Activated CD4-positive, alpha-beta memory T cell treated with anti-CD3 and anti-CD28 coated beads, Interleukin-2, amount 10 ng/mL, durations not matched to agents 7 days and 5 days (primary cell): ENCODE measurements at regions of chr9 and their contacts with region 1.

Region 1: DNA sequence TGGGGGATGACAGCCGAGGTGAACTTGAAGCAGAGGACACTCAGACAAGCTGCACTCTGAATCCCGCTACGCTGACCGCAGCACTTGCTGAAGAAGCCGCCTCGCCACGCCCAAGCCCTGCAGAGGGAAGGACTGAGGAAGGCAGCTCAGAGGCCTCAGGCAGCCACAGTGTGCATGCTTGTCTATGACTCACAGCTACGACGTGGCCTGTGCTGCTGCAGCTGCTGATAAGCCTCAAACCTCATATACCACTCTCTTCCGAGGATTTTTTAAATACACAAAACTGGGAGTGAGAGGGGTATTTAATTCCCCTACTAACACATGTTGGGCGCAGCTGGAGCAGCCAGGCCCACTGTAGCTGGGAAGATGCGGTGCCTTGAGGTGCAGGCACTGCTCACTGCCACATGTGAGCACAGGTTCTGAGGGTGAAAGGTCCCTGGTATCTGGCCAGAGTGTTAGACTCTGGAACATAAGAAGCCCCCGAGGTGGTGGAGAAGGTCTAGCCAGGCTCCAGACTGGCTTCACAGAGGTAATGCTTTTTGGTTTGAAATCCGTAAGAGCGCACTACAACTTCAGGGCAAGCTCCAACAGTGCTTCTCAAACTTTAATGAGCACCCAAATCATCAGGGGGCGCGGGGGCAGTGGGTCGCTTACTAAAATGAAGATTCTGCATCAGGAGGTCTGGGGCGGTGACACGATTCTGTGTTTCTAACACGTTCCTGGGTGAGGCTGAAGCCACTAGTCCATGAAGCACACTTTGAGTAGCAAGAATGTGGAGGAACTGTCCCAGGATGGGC is 196.8 kb downstream of the AUH start:
- DNase-seq: peak; percentile 91
- H3K4me3 Mint-ChIP-seq: peak overlapping the region; percentile 88
- H3K27ac Mint-ChIP-seq: peak overlapping the region; percentile 94
- H3K4me1 Mint-ChIP-seq: peaks cover 70% of the 10 kb centered on the region
- H3K27me3 Mint-ChIP-seq: no peaks in the 10 kb centered on the region

Region 2: GRCh38 chr9:91036826-91037510 is 128.0 kb before region 1 on chr9:
- CTCF ChIA-PET with region 1: interaction called, 6 read pairs
- POLR2A ChIA-PET with region 1: interaction called, 13 read pairs
- DNase-seq: peak; percentile 85
- H3K4me3 Mint-ChIP-seq: peak overlapping the region; percentile 31
- H3K27ac Mint-ChIP-seq: peak overlapping the region; percentile 74
- H3K4me1 Mint-ChIP-seq: peaks cover 65% of the 10 kb centered on the region
- H3K27me3 Mint-ChIP-seq: no peaks in the 10 kb centered on the region

Region 3: DNA sequence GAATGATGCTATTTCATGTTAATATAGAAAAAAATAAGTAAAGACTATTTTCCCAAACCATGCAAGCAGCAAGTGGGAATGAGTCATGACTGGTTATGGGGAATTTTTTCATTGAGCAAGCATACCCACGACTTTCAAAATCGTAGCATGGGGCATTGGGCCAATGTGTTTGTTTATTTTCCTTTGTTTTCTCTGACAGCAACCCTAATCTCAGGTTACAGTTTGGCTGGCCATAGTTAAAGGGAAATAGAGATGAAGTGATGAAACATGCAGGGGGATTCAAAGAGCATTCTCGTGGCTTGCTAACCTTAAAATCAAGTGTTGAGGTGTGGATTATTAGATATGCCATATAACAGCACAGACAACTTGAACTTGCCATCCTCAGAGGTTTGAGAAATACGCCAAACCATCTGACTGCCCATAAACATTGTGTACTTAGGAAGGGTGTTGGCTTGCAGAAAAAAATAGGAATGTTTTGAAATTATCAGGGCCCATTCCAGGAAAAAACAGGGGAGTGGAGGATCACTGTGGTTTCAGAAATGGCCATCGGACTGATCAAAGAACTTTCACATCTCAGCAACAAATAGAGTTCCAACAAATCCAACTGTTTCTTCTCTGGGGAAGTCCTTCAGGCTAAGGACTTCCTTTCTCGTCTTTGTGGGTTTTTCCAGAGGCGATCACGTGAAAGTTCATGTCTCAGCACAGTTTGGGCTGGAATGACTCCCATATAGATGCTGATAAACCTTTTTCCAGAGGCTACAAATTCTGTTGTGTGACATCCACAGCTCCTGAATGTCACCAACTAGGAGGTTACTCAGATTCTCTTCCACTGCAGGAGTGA is 104.2 kb before region 1 on chr9:
- CTCF ChIA-PET with region 1: no interaction called
- POLR2A ChIA-PET with region 1: no interaction called
- DNase-seq: no peak
- H3K4me3 Mint-ChIP-seq: no peak overlapping the region
- H3K27ac Mint-ChIP-seq: no peak overlapping the region
- H3K4me1 Mint-ChIP-seq: peaks cover 23% of the 10 kb centered on the region
- H3K27me3 Mint-ChIP-seq: no peaks in the 10 kb centered on the region

Region 4: DNA sequence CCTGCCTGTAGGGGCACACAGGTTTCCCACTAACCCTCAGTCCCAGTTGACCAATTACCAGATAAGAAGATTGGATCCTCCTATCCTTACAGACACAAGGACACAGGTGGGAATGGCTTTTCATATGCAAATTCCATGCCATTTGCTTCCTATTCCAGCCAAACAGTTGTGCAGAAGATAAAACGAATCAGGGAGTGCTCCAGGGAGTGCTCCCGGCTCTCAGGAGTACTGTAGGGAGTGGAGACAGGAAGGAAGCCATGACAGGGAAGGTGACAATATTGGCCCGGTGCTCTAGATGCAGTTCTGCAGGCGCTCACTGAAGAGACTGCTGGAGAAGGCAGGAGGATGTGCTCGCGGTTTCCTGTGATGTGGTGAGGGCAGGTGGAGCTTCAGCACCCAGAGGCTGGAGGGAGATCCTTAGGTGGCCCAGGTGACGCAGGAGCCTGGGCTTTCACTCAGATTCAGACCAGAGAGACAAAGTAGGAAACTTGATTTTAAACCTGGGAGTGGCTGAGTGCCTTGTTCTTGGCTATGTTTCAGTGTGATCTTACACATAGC is 63.2 kb before region 1 on chr9:
- CTCF ChIA-PET with region 1: no interaction called
- POLR2A ChIA-PET with region 1: interaction called, 92 read pairs
- DNase-seq: peak; percentile 94
- H3K4me3 Mint-ChIP-seq: peak overlapping the region; percentile 62
- H3K27ac Mint-ChIP-seq: peak overlapping the region; percentile 81
- H3K4me1 Mint-ChIP-seq: peaks cover 77% of the 10 kb centered on the region
- H3K27me3 Mint-ChIP-seq: no peaks in the 10 kb centered on the region

Region 5: GRCh38 chr9:91177661-91178280 is 12.8 kb after region 1 on chr9:
- CTCF ChIA-PET with region 1: interaction called, 32 read pairs
- POLR2A ChIA-PET with region 1: interaction called, 132 read pairs
- DNase-seq: peak; percentile 69
- H3K4me3 Mint-ChIP-seq: peak overlapping the region; percentile 40
- H3K27ac Mint-ChIP-seq: peak overlapping the region; percentile 92
- H3K4me1 Mint-ChIP-seq: peaks cover 64% of the 10 kb centered on the region
- H3K27me3 Mint-ChIP-seq: no peaks in the 10 kb centered on the region

Region 6: GRCh38 chr9:91193658-91194391 is 28.9 kb after region 1 on chr9:
- CTCF ChIA-PET with region 1: interaction called, 15 read pairs
- POLR2A ChIA-PET with region 1: interaction called, 167 read pairs
- DNase-seq: peak; percentile 92
- H3K4me3 Mint-ChIP-seq: peak overlapping the region; percentile 77
- H3K27ac Mint-ChIP-seq: peak overlapping the region; percentile 98
- H3K4me1 Mint-ChIP-seq: peaks cover 75% of the 10 kb centered on the region
- H3K27me3 Mint-ChIP-seq: no peaks in the 10 kb centered on the region

Region 7: GRCh38 chr9:91245431-91246313 is 80.8 kb after region 1 on chr9:
- CTCF ChIA-PET with region 1: no interaction called
- POLR2A ChIA-PET with region 1: interaction called, 23 read pairs
- DNase-seq: no peak
- H3K4me3 Mint-ChIP-seq: no peak overlapping the region
- H3K27ac Mint-ChIP-seq: peak overlapping the region; percentile 56
- H3K4me1 Mint-ChIP-seq: peaks cover 48% of the 10 kb centered on the region
- H3K27me3 Mint-ChIP-seq: no peaks in the 10 kb centered on the region

Region 8: GRCh38 chr9:91273853-91274552 is 109.1 kb after region 1 on chr9:
- CTCF ChIA-PET with region 1: no interaction called
- POLR2A ChIA-PET with region 1: no interaction called
- DNase-seq: no peak
- H3K4me3 Mint-ChIP-seq: no peak overlapping the region
- H3K27ac Mint-ChIP-seq: no peak overlapping the region
- H3K4me1 Mint-ChIP-seq: peaks cover 25% of the 10 kb centered on the region
- H3K27me3 Mint-ChIP-seq: no peaks in the 10 kb centered on the region

Region 9: GRCh38 chr9:91346652-91347051 is 181.7 kb after region 1 on chr9:
- CTCF ChIA-PET with region 1: no interaction called
- POLR2A ChIA-PET with region 1: interaction called, 14 read pairs
- DNase-seq: no peak
- H3K4me3 Mint-ChIP-seq: no peak overlapping the region
- H3K27ac Mint-ChIP-seq: no peak overlapping the region
- H3K4me1 Mint-ChIP-seq: peaks cover 68% of the 10 kb centered on the region
- H3K27me3 Mint-ChIP-seq: no peaks in the 10 kb centered on the region

Region 10: DNA sequence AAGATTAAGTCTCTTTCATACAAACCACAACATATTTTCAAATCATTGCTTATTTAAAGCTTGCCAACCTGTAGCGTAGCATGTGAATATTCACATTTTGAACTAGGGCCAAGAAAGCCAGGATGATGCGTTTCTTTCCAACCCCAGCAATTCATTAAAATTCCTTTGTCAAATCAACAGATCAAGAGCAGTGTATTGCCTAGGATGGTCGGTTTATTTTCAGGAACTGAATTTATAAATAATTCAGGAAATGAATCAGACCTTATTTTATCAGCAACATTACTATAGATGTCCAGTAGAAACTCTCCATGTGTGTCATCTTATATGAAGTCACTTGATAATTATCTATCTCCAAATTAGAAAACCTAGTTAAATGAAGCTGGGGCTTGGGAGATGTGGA is 210.0 kb after region 1 on chr9:
- CTCF ChIA-PET with region 1: no interaction called
- POLR2A ChIA-PET with region 1: no interaction called
- DNase-seq: no peak
- H3K4me3 Mint-ChIP-seq: no peak overlapping the region
- H3K27ac Mint-ChIP-seq: no peak overlapping the region
- H3K4me1 Mint-ChIP-seq: peaks cover 12% of the 10 kb centered on the region
- H3K27me3 Mint-ChIP-seq: peaks cover 4% of the 10 kb centered on the region